ENCODE measurements at regions of chr1 and their contacts with region 1.

Region 1: GRCh38 chr1:182446033-182446669 is 3.8 kb upstream of the RGSL1 start:
- DNase-seq: peak; percentile 67
- H3K4me3 ChIP-seq: no peak overlapping the region
- H3K27ac ChIP-seq: no peak overlapping the region
- H3K4me1 ChIP-seq: no peaks in the 10 kb centered on the region
- H3K27me3 ChIP-seq: peaks cover 9% of the 10 kb centered on the region; the same call in 1 of the 2 replicates

Region 2: DNA sequence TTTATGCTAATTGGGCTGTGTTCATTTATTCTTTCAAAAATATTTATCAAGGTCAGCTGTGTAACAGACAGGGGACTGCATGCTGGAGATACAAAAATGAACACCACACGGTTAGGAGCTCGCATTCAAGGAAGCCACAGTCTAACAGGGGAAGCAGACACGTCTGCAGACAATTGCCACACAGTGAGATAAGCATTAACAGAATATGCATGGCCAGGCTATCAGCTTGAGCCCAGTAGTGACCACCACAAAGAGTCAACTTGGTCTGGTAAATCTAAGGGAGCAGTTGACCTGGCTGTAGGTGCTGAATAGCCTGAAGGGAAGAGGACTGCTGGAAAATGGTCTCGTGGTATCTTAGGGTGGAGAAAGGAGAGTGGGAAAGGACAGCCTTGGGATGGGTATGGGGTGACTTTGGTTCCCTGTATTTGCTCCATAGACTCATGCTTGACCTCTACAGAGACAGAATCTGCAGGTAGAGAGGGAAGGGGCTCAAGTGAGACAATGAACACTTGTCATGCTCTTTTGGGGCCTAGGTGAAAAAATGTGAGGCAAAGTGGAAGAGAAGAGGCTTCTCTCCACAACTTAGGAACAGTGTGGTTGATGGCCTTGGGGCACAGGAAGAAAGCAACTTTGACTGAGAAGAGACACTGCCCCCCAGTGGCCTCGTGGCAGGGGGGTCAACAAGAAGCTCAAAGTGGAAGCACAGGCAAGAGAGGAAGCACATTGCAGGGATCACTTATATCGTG is 335.9 kb after region 1 on chr1:
- in situ Hi-C with region 1: loop called (anchors 5 kb)
- DNase-seq: peak; percentile 75
- H3K4me3 ChIP-seq: no peak overlapping the region
- H3K27ac ChIP-seq: no peak overlapping the region
- H3K4me1 ChIP-seq: no peaks in the 10 kb centered on the region
- H3K27me3 ChIP-seq: no peaks in the 10 kb centered on the region

Region 3: GRCh38 chr1:182905316-182905715 is 459.2 kb after region 1 on chr1:
- in situ Hi-C with region 1: no loop called
- DNase-seq: no peak
- H3K4me3 ChIP-seq: no peak overlapping the region
- H3K27ac ChIP-seq: no peak overlapping the region
- H3K4me1 ChIP-seq: no peaks in the 10 kb centered on the region
- H3K27me3 ChIP-seq: no peaks in the 10 kb centered on the region